ENCODE measurements at regions of chr6 and their contacts with region 1.

Region 1: GRCh38 chr6:13427801-13428582 is 59.4 kb downstream of the GFOD1 start:
- DNase-seq: peak; percentile 41 to 70 (median 50)
- H3K4me3 ChIP-seq: peak overlapping the region; percentile 7 to 24
- H3K4me3 Mint-ChIP-seq: peak overlapping the region; percentile 73 to 88 (median 82)
- H3K27ac ChIP-seq: no peak overlapping the region
- H3K27ac Mint-ChIP-seq: peak overlapping the region; percentile 54 to 90 (median 85)
- H3K4me1 ChIP-seq: peaks cover 45% of the 10 kb centered on the region
- H3K4me1 Mint-ChIP-seq: peaks cover 26 to 57% (median 39%) of the 10 kb centered on the region in 4 donors
- H3K27me3 ChIP-seq: no peaks in the 10 kb centered on the region
- H3K27me3 Mint-ChIP-seq: no peaks in the 10 kb centered on the region

Region 2: GRCh38 chr6:13487122-13488014 is 59.4 kb after region 1 on chr6 and contains the start of gene GFOD1:
- CTCF ChIA-PET with region 1: no interaction called
- POLR2A ChIA-PET with region 1: no interaction called
- intact Hi-C with region 1: loop called (anchors 5 kb)
- DNase-seq: peak; percentile 55 to 68 (median 61)
- H3K4me3 ChIP-seq: peak within 1 kb of the TSS; percentile 67 to 69
- H3K4me3 Mint-ChIP-seq: peak within 1 kb of the TSS; percentile 88 to 94 (median 92)
- H3K27ac ChIP-seq: peak within 1 kb of the TSS; percentile 4
- H3K27ac Mint-ChIP-seq: peak within 1 kb of the TSS; percentile 42 to 78 (median 73)
- H3K4me1 ChIP-seq: peaks cover 12% of the 10 kb centered on the region
- H3K4me1 Mint-ChIP-seq: peaks cover 16 to 36% (median 30%) of the 10 kb centered on the region in 4 donors
- H3K27me3 ChIP-seq: no peaks in the 10 kb centered on the region
- H3K27me3 Mint-ChIP-seq: peaks cover 5 to 6% of the 10 kb centered on the region in 2 donors
- total RNA-seq, gene GFOD1: 0.97 to 1.1 TPM